ENCODE measurements at regions of chr17 and their contacts with region 1.

Region 1: DNA sequence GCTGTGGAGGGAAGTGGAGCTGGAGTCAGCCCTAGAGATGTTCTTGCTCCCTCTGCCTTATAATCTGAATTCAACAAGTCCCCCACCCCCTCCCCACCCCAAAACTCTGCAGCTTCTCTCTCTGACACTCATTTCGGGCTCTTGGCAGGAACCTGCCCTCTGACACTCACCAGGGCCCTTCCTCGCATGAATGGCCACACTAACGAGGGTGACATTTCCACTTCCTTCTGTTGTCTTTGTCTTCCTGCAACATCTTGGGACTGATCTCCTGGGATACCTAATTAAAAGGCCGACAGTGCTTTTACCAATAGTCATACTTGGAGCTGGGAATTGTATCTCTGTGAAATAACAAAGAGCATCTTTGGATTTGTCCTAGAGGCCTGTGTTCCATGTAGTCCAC is 106.9 kb upstream of the PIRT start:
- DNase-seq: no peak
- ATAC-seq: no peak
- H3K4me3 ChIP-seq: no peak overlapping the region
- H3K27ac ChIP-seq: no peak overlapping the region
- H3K4me1 ChIP-seq: no peaks in the 10 kb centered on the region
- H3K27me3 ChIP-seq: no peaks in the 10 kb centered on the region

Region 2: GRCh38 chr17:10844621-10845387 is 100.0 kb before region 1 on chr17:
- intact Hi-C with region 1: no loop called
- DNase-seq: peak; percentile 78 to 90 (median 86)
- ATAC-seq: peak; percentile 95
- H3K4me3 ChIP-seq: peak overlapping the region; percentile 67
- H3K27ac ChIP-seq: no peak overlapping the region
- H3K4me1 ChIP-seq: no peaks in the 10 kb centered on the region
- H3K27me3 ChIP-seq: no peaks in the 10 kb centered on the region

Region 3: GRCh38 chr17:10888858-10889257 is 56.0 kb before region 1 on chr17:
- intact Hi-C with region 1: loop called in 1 of 4 experiments (anchors 10 kb)
- DNase-seq: no peak
- ATAC-seq: no peak
- H3K4me3 ChIP-seq: no peak overlapping the region
- H3K27ac ChIP-seq: no peak overlapping the region
- H3K4me1 ChIP-seq: no peaks in the 10 kb centered on the region
- H3K27me3 ChIP-seq: peaks cover 2% of the 10 kb centered on the region

Region 4: GRCh38 chr17:11006530-11006929 is 61.7 kb after region 1 on chr17:
- intact Hi-C with region 1: no loop called
- DNase-seq: peak in 1 of 3 donors; percentile 40
- ATAC-seq: no peak
- H3K4me3 ChIP-seq: no peak overlapping the region
- H3K27ac ChIP-seq: no peak overlapping the region
- H3K4me1 ChIP-seq: no peaks in the 10 kb centered on the region
- H3K27me3 ChIP-seq: no peaks in the 10 kb centered on the region

Region 5: DNA sequence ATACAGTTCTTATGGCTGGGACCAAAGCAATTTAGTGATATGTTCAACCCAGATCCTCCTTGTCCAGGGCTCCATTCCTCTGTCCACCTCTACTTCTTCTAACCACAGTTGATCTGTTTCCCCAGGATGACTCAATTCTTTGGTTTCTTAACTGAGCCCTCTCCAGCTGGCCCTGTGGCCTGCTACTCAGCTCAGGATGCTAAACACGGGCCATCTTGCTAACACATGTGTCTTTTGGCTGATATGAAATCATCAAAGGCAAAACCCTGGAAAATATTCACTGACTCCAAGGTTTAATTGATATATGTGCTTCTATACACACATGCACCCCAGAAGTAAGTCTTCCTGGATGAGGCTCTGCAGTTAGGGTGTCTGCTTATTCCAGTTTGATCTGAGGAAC is 340.0 kb after region 1 on chr17:
- intact Hi-C with region 1: no loop called
- DNase-seq: no peak
- ATAC-seq: no peak
- H3K4me3 ChIP-seq: no peak overlapping the region
- H3K27ac ChIP-seq: no peak overlapping the region
- H3K4me1 ChIP-seq: no peaks in the 10 kb centered on the region
- H3K27me3 ChIP-seq: no peaks in the 10 kb centered on the region